PC-9 (cell line): ENCODE measurements at regions of chr3 and their contacts with region 1.

Region 1: GRCh38 chr3:149717391-149718056 is 34.8 kb downstream of the COMMD2 start:
- DNase-seq: peak; percentile 58 to 61
- H3K4me3 ChIP-seq: no peak overlapping the region
- H3K27ac ChIP-seq: no peak overlapping the region
- H3K4me1 ChIP-seq: 0 out of 2 replicates have a peak, but pooled peaks cover 4% of the 10 kb centered on the region
- H3K27me3 ChIP-seq: no peaks in the 10 kb centered on the region
- CTCF ChIP-seq: peak; percentile 81

Region 2: GRCh38 chr3:149224736-149225594 is 492.6 kb before region 1 on chr3:
- CTCF ChIA-PET with region 1: no interaction called
- POLR2A ChIA-PET with region 1: no interaction called
- intact Hi-C with region 1: no loop called
- DNase-seq: peak; percentile 34 to 90
- H3K4me3 ChIP-seq: peak overlapping the region; percentile 50
- H3K27ac ChIP-seq: peak overlapping the region; percentile 85
- H3K4me1 ChIP-seq: peaks cover 20% of the 10 kb centered on the region
- H3K27me3 ChIP-seq: no peaks in the 10 kb centered on the region
- CTCF ChIP-seq: no peak

Region 3: GRCh38 chr3:149566292-149566975 is 151.1 kb before region 1 on chr3:
- CTCF ChIA-PET with region 1: interaction called, 11 read pairs
- POLR2A ChIA-PET with region 1: no interaction called
- intact Hi-C with region 1: loop called (anchors 1 kb)
- DNase-seq: no peak
- H3K4me3 ChIP-seq: no peak overlapping the region
- H3K27ac ChIP-seq: no peak overlapping the region
- H3K4me1 ChIP-seq: no peaks in the 10 kb centered on the region; the same call in none of the 2 replicates
- H3K27me3 ChIP-seq: no peaks in the 10 kb centered on the region
- CTCF ChIP-seq: no peak

Region 4: DNA sequence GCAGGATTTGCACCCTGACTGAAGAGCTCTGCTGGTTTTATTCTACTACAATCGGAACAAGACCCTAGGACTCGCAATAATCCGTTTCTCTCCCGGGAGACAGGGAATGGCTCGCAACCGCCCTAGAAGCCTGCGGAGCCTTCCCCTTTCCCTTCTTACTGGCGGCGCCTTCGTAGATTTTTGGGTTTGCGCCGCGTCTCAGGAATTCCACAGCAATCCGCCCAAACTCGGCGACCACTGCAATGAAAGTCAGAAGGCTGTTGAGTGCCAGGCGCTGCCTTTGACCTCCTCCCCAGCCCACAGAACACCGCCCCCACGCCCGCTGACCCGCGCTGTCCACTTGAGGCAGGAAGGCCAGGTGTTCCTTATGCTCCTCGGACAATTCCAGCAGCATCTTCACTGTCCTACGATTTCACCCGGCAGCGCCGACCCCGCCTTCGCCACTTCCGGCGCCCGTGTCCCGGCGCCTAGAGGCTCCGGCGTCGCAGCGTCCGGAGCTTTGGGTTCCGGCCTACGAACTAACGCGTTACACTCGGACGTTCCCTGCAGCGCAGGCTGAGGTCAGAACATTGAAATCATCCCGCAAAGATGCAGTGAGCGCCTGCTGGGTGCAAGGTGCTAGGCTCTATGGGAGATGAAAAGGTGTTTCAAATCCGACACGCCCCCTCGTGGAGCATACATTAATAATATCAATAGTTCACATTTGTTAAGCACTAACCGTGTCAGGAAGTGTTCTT is 34.7 kb after region 1 on chr3 and contains the start of gene COMMD2:
- CTCF ChIA-PET with region 1: interaction called, 4 read pairs
- POLR2A ChIA-PET with region 1: no interaction called
- intact Hi-C with region 1: loop called (anchors 1 kb)
- DNase-seq: peak; percentile 79 to 84
- H3K4me3 ChIP-seq: peak within 1 kb of the TSS; percentile 88
- H3K27ac ChIP-seq: peak within 1 kb of the TSS; percentile 51
- H3K4me1 ChIP-seq: peaks cover 17% of the 10 kb centered on the region
- H3K27me3 ChIP-seq: no peaks in the 10 kb centered on the region
- CTCF ChIP-seq: peak; percentile 74
- total RNA-seq, gene COMMD2: 58.2 and 74.7 TPM in 2 replicates